Mucosa of descending colon (tissue), 3 donors: ENCODE measurements at regions of chr9 and their contacts with region 1.

Region 1: DNA sequence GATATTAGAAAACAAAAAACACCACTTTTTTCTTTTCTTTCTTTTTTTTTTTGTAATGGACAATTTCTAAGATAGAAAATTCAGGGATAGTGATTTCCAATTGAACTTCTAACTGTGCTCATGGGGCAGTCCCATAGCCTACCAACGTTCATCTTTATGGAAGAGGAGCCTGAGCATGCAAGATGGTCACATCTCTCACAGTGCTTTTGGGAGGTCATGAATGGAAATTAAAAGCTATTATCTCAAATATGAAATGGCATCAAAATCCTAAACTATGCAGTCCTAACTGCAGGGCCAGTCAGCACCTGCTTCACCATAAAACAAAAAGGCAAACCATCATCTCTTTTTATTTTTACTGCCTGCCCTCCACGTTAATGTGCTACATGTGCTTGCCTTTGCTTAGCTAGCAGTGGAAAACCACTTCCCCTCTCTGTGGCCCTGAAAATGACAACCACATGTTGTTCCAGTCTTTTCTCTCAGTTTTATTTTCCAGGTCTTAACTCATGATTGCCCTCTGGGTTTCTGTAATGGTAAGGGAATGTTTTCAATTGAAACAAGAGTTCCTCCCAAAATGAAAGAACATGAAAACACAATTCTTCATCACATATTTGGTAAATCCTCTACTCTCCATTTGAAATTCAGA is 16.7 kb downstream of the IFNB1 start:
- DNase-seq: peak in 1 of 3 donors; percentile 25
- ATAC-seq: peak; percentile 22
- H3K4me3 ChIP-seq: no peak overlapping the region
- H3K4me1 ChIP-seq: no peaks in the 10 kb centered on the region
- CTCF ChIP-seq: no peak

Region 2: DNA sequence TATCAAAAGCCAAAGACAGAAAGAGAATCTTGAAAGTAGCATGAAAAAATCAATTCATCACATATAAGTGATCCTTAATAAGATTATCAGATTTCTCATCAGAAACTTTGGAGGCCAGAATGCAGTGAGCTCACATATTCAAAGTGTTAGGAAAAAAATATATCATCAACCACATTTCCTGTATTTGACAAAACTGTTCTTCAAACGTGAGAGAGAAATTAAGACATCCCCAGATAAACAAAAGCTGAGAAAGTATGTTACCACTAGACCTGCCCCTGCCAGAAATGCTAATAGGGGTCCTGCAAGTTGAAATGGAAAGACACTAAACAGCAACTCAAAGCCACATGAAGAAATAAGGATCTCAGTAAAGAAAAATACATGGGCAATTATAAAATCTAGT is 59.5 kb before region 1 on chr9:
- intact Hi-C with region 1: loop called in 1 of 2 experiments (anchors 10 kb)
- DNase-seq: no peak
- ATAC-seq: no peak
- H3K4me3 ChIP-seq: no peak overlapping the region
- H3K4me1 ChIP-seq: no peaks in the 10 kb centered on the region
- CTCF ChIP-seq: no peak